ENCODE measurements at regions of chr6 and their contacts with region 1.

Region 1: GRCh38 chr6:2952557-2953095 is 18.7 kb downstream of the SERPINB6 start:
- DNase-seq: peak; percentile 48 to 78 (median 69)
- H3K4me3 ChIP-seq: peak overlapping the region in 37 of 59 donors; percentile 0 to 50 (median 24)
- H3K27ac ChIP-seq: peak overlapping the region; percentile 3 to 90 (median 75)
- H3K27me3 ChIP-seq: no peaks in the 10 kb centered on the region
- CTCF ChIP-seq: peak; percentile 67 to 98 (median 94)

Region 2: DNA sequence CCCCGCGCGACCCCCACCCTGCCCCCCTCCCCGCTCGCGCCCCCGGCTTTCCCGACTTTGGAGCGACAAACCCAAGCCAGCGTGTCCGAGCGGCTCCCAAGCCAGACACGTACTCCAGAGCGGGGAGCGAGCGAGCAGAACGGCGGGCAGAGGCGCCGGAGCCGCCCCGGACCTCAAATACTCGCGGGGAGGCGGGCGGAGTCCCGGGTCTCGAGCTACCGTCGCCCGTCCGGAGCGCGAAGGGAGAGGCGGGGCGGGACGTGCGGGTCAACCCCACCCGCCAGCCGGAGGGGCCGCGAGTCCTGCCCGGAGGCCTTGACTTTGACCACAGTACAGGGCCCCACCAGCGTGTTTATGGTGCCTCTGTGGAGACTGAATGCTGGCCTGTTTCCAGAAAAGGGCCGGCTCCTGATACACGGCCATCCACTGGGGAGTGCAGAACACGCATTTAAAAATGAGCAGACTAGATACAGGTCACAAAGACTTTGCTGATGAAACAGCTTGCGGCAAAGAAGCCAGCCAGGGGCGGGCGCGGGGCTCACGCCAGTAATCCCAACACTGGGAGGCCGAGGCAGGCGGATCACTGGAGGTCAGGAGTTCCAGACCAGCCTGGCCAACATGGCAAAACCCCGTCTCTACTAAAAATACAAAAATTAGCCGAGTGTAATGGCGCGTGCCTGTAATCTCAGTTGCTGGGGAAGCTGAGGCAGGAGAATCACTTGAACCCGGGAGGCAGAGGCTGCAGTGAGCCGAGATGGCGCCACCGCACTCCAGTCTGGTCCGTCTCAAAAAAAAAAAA is 19.0 kb after region 1 on chr6 and contains the start of gene SERPINB6:
- intact Hi-C with region 1: loop called (anchors 2 kb)
- DNase-seq: peak; percentile 58 to 84 (median 79)
- H3K4me3 ChIP-seq: peak within 1 kb of the TSS; percentile 58 to 89 (median 79)
- H3K27ac ChIP-seq: peak within 1 kb of the TSS; percentile 82 to 100 (median 98)
- H3K27me3 ChIP-seq: no peaks in the 10 kb centered on the region
- CTCF ChIP-seq: peak in 10 of 56 donors; percentile 0 to 26 (median 10)
- total RNA-seq, gene SERPINB6: 44.0 to 114 (median 69.4) TPM